OCI-LY7 (cell line): ENCODE measurements at regions of chr4 and their contacts with region 1.

Region 1: DNA sequence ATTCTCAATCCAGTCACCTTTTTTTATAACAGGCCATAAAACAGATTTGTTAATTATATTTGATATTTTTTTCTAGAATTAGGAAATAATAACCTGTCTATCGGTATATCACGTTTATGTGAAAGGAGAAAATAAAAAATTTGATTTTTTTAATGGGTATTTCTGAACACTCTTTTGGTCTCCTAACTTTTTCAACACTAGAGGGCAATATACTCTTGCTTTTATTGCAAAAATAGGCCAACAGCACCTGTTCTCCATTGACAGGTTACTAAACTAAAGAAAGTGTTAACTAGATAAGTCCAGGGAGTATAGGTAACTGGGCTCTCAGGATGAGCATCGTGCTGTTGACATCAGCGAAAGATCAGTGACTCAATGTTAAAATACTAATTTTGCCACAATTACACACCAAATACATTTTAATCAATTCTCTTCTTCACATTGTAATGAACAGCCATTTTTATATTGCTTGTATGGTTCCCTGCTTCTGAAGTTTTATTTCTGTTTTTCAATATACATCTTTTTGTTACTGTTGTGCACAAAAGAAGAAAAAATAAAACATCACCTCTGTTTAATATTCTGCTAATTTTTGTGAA is 22.8 kb downstream of the NDST4 start:
- DNase-seq: peak; percentile 56
- H3K4me3 ChIP-seq: no peak overlapping the region
- H3K27ac ChIP-seq: no peak overlapping the region
- H3K4me1 ChIP-seq: no peaks in the 10 kb centered on the region
- CTCF ChIP-seq: peak; percentile 89

Region 2: DNA sequence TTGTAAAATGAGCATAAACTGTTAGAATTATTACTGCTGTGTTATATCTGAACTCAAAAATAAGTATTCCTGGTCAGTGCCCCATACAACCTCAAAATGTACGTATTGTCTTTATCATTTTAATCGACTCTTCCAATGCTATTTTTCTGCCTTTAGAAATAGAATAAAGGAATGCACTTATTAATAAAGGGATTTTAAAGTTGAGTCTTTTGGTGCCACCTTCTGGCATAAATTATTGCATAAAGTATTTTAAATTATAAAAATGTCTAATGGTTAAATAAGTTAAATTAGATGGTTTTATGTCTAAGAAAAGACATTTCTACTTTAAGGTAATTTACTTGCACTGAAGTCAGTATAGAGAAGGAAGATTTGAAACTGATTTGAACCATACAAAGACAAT is 446.8 kb after region 1 on chr4:
- CTCF ChIA-PET with region 1: no interaction called
- POLR2A ChIA-PET with region 1: no interaction called
- intact Hi-C with region 1: loop called (anchors 10 kb)
- DNase-seq: peak; percentile 1
- H3K4me3 ChIP-seq: no peak overlapping the region
- H3K27ac ChIP-seq: no peak overlapping the region
- H3K4me1 ChIP-seq: no peaks in the 10 kb centered on the region
- CTCF ChIP-seq: peak; percentile 64

Region 3: GRCh38 chr4:115851918-115852766 is 761.6 kb after region 1 on chr4:
- CTCF ChIA-PET with region 1: no interaction called
- POLR2A ChIA-PET with region 1: no interaction called
- intact Hi-C with region 1: loop called (anchors 2 kb)
- DNase-seq: peak; percentile 58
- H3K4me3 ChIP-seq: no peak overlapping the region
- H3K27ac ChIP-seq: no peak overlapping the region
- H3K4me1 ChIP-seq: no peaks in the 10 kb centered on the region
- CTCF ChIP-seq: peak; percentile 83